ENCODE measurements at regions of chr13 and their contacts with region 1.

Region 1: GRCh38 chr13:69524459-69525155 is 583.0 kb upstream of the ATXN8OS start:
- DNase-seq: peak; percentile 20
- H3K4me3 Mint-ChIP-seq: no peak overlapping the region
- H3K27ac Mint-ChIP-seq: no peak overlapping the region
- H3K4me1 Mint-ChIP-seq: no peaks in the 10 kb centered on the region
- H3K27me3 Mint-ChIP-seq: no peaks in the 10 kb centered on the region
- CTCF ChIP-seq: peak; percentile 48

Region 2: DNA sequence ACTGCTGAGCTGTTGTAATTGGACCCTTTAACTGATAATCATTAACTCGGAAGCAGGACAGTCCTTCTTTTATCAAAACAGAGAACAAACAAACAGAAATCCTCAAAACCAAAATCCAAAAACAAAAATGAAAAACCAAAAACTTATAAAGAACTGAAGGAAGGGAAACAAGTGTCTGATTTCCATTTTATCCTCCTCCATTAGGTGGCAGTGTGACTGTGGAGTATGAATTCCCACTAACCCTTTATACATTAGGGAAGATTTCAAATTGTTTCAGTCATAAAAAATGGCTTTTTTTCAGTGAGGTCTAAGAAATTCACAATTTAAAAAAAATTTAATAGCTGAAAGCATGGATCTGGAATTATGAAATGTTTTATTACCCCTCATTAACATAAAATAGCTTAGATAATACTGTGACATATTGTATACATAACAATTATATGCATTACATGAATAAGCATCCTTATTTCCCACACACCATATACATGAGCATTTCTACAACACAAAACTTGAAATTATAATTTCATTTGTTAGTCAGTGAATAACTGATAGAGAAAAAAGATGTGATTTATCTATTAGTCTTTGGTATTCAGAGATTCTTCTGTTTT is 1220.2 kb before region 1 on chr13:
- CTCF ChIA-PET with region 1: interaction called, 3 read pairs
- POLR2A ChIA-PET with region 1: no interaction called
- intact Hi-C with region 1: loop called (anchors 5 kb)
- DNase-seq: peak; percentile 62
- H3K4me3 Mint-ChIP-seq: no peak overlapping the region
- H3K27ac Mint-ChIP-seq: no peak overlapping the region
- H3K4me1 Mint-ChIP-seq: no peaks in the 10 kb centered on the region
- H3K27me3 Mint-ChIP-seq: no peaks in the 10 kb centered on the region
- CTCF ChIP-seq: peak; percentile 60

Region 3: GRCh38 chr13:68938639-68939038 is 586.0 kb before region 1 on chr13:
- CTCF ChIA-PET with region 1: no interaction called
- POLR2A ChIA-PET with region 1: no interaction called
- intact Hi-C with region 1: loop called (anchors 10 kb)
- DNase-seq: no peak
- H3K4me3 Mint-ChIP-seq: no peak overlapping the region
- H3K27ac Mint-ChIP-seq: no peak overlapping the region
- H3K4me1 Mint-ChIP-seq: no peaks in the 10 kb centered on the region
- H3K27me3 Mint-ChIP-seq: no peaks in the 10 kb centered on the region
- CTCF ChIP-seq: no peak

Region 4: GRCh38 chr13:69444756-69445155 is 79.9 kb before region 1 on chr13:
- CTCF ChIA-PET with region 1: no interaction called
- POLR2A ChIA-PET with region 1: no interaction called
- intact Hi-C with region 1: no loop called
- DNase-seq: no peak
- H3K4me3 Mint-ChIP-seq: no peak overlapping the region
- H3K27ac Mint-ChIP-seq: no peak overlapping the region
- H3K4me1 Mint-ChIP-seq: no peaks in the 10 kb centered on the region
- H3K27me3 Mint-ChIP-seq: no peaks in the 10 kb centered on the region
- CTCF ChIP-seq: no peak

Region 5: DNA sequence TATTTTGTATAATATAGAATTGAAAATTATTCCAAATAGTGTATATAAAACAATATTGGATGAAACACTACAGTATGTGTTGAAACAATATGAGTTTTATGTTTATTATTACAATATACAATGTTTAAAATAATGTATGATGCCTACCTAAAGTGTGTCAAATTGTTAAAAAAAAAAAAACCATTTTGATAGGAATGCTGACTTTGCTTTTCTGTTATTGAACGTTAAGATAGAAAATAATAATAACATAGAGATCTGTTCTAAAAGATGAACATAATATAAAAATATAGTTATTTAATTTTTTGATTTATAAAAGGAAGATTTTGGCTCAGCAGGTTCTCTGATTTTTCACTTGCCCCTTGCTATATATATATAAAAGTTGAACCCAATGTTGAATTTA is 108.4 kb after region 1 on chr13:
- CTCF ChIA-PET with region 1: no interaction called
- POLR2A ChIA-PET with region 1: no interaction called
- intact Hi-C with region 1: no loop called
- DNase-seq: no peak
- H3K4me3 Mint-ChIP-seq: no peak overlapping the region
- H3K27ac Mint-ChIP-seq: no peak overlapping the region
- H3K4me1 Mint-ChIP-seq: no peaks in the 10 kb centered on the region
- H3K27me3 Mint-ChIP-seq: peaks cover 84% of the 10 kb centered on the region
- CTCF ChIP-seq: no peak

Region 6: GRCh38 chr13:70043685-70044084 is 519.1 kb after region 1 on chr13:
- CTCF ChIA-PET with region 1: no interaction called
- POLR2A ChIA-PET with region 1: no interaction called
- intact Hi-C with region 1: no loop called
- DNase-seq: peak; percentile 39
- H3K4me3 Mint-ChIP-seq: no peak overlapping the region
- H3K27ac Mint-ChIP-seq: no peak overlapping the region
- H3K4me1 Mint-ChIP-seq: no peaks in the 10 kb centered on the region
- H3K27me3 Mint-ChIP-seq: peaks cover 62% of the 10 kb centered on the region
- CTCF ChIP-seq: no peak